Lower leg skin (tissue), 4 donors: ENCODE measurements at regions of chr10 and their contacts with region 1.

Region 1: GRCh38 chr10:95536017-95536416 is 25.2 kb downstream of the SORBS1 start:
- DNase-seq: no peak
- H3K4me3 ChIP-seq: no peak overlapping the region
- CTCF ChIP-seq: no peak
- POLR2A ChIP-seq: no peak

Region 2: DNA sequence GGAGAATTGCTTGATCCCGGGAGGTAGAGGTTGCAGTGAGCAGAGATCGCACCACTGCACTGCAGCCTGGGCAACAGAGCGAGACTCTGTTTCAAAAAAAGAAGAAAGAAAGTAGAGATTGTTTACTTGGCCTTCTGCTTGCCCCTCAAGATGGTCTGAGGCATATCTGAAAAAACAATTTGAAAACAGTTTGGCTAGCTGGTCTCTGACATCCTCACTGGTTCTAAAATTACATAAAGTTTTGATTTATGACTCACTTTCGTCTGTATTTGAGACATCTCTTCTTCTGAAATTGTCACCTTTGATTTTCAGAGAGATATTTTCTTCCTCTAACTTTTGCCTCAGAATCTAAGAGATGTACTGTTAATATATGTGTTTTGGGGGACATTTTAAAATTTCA is 1040.0 kb before region 1 on chr10:
- intact Hi-C with region 1: loop called (anchors 10 kb)
- DNase-seq: no peak
- H3K4me3 ChIP-seq: no peak overlapping the region
- CTCF ChIP-seq: no peak
- POLR2A ChIP-seq: no peak